Activated CD8-positive, alpha-beta T cell treated with anti-CD3 and anti-CD28 coated beads for 36 hours (primary cell): ENCODE measurements at regions of chr10 and their contacts with region 1.

Region 1: DNA sequence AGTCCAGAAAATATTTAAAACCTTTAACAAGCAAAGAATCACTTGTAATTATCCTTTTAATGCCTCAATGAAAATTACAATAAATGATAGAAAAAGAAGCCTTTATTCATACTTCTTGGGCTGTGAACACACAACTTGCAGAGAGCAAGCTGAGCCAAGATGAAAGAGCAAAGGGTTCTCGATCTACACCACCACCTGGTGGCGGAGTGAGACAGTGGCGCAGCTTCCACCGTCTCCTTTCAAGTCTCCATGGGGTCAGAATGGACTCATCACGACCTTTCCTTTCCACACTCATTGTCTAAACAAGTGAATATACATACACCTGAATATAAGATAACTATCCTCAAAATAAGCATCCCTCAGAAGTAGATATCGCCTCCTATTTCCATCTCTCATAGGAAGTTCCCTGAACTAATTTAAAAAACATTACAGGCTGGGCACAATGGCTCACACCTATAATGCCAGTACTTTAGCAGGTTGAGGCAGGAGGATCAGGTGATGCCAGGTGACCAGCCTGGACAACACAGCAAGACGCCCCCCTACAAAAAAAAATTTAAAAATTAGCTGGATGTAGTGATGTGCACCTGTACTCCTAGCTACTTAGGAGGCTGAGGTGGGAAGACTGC is 40.7 kb downstream of the ATE1 start:
- DNase-seq: peak; percentile 67
- ATAC-seq: peak; percentile 81
- H3K4me3 Mint-ChIP-seq: no peak overlapping the region
- H3K27ac Mint-ChIP-seq: no peak overlapping the region
- H3K4me1 Mint-ChIP-seq: no peaks in the 10 kb centered on the region
- H3K27me3 Mint-ChIP-seq: no peaks in the 10 kb centered on the region
- CTCF ChIP-seq: peak; percentile 70

Region 2: DNA sequence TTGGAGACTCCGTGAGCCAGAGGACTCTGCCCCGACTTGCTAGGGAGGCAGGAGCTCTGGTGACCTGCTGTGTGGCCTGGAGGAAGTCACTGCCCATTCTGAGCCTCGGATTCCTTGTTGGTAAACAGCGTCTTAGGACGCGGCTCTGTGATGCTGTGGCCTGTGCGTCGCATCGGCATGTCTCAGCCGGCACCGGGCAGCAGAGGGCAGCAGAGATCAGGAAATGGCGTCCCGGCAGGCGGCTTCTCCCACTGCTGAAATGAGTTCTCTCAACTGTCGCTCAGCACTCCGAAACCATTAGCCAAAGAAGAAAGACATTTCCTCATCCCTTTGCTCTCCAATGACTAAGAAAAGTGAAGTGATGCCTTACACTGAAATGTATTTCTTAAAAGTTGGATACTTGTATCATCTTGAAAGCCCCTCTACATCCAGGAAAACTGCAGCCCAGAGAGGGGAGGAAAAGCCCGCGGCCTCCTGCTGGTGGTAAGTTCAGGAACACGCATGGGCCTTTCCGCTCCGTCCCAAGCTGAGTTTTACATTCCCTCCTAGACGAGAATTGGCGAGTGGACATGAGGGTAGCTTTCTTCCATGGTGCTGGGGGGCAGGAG is 944.2 kb before region 1 on chr10:
- CTCF ChIA-PET with region 1: interaction called, 3 read pairs
- POLR2A ChIA-PET with region 1: no interaction called
- intact Hi-C with region 1: loop called (anchors 5 kb)
- DNase-seq: peak; percentile 80
- ATAC-seq: peak; percentile 97
- H3K4me3 Mint-ChIP-seq: no peak overlapping the region
- H3K27ac Mint-ChIP-seq: no peak overlapping the region
- H3K4me1 Mint-ChIP-seq: peaks cover 3% of the 10 kb centered on the region
- H3K27me3 Mint-ChIP-seq: peaks cover 22% of the 10 kb centered on the region
- CTCF ChIP-seq: peak; percentile 82

Region 3: GRCh38 chr10:120948889-120949608 is 938.1 kb before region 1 on chr10:
- CTCF ChIA-PET with region 1: interaction called, 15 read pairs
- POLR2A ChIA-PET with region 1: no interaction called
- intact Hi-C with region 1: loop called (anchors 5 kb)
- DNase-seq: peak; percentile 68
- ATAC-seq: peak; percentile 98
- H3K4me3 Mint-ChIP-seq: no peak overlapping the region
- H3K27ac Mint-ChIP-seq: no peak overlapping the region
- H3K4me1 Mint-ChIP-seq: no peaks in the 10 kb centered on the region
- H3K27me3 Mint-ChIP-seq: peaks cover 35% of the 10 kb centered on the region
- CTCF ChIP-seq: peak; percentile 75

Region 4: GRCh38 chr10:121823993-121824463 is 63.1 kb before region 1 on chr10:
- CTCF ChIA-PET with region 1: interaction called, 34 read pairs
- POLR2A ChIA-PET with region 1: no interaction called
- intact Hi-C with region 1: no loop called
- DNase-seq: peak; percentile 3
- ATAC-seq: peak; percentile 53
- H3K4me3 Mint-ChIP-seq: no peak overlapping the region
- H3K27ac Mint-ChIP-seq: no peak overlapping the region
- H3K4me1 Mint-ChIP-seq: peaks cover 2% of the 10 kb centered on the region
- H3K27me3 Mint-ChIP-seq: no peaks in the 10 kb centered on the region
- CTCF ChIP-seq: peak; percentile 73

Region 5: DNA sequence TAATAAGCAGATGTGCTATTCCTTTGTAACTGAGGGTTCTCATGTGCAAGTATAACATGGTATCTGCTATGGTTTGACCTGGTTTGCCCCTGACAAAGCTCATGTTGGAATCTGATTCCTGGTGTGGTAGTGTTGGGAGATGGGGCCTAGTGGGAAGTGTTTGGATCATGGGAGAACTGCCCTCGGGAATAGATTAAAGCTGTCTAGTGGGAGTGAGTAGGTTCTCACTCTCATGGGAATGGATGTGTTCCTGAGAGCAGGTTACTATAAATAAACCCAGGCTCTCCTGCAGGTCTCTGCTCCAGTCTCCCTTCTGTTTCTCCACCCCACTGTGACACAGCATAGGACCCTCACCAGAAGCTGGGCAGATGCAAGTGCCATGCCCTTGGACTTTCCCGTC is 57.0 kb before region 1 on chr10:
- CTCF ChIA-PET with region 1: interaction called, 34 read pairs
- POLR2A ChIA-PET with region 1: no interaction called
- intact Hi-C with region 1: no loop called
- DNase-seq: no peak
- ATAC-seq: no peak
- H3K4me3 Mint-ChIP-seq: no peak overlapping the region
- H3K27ac Mint-ChIP-seq: no peak overlapping the region
- H3K4me1 Mint-ChIP-seq: no peaks in the 10 kb centered on the region
- H3K27me3 Mint-ChIP-seq: no peaks in the 10 kb centered on the region
- CTCF ChIP-seq: no peak

Region 6: DNA sequence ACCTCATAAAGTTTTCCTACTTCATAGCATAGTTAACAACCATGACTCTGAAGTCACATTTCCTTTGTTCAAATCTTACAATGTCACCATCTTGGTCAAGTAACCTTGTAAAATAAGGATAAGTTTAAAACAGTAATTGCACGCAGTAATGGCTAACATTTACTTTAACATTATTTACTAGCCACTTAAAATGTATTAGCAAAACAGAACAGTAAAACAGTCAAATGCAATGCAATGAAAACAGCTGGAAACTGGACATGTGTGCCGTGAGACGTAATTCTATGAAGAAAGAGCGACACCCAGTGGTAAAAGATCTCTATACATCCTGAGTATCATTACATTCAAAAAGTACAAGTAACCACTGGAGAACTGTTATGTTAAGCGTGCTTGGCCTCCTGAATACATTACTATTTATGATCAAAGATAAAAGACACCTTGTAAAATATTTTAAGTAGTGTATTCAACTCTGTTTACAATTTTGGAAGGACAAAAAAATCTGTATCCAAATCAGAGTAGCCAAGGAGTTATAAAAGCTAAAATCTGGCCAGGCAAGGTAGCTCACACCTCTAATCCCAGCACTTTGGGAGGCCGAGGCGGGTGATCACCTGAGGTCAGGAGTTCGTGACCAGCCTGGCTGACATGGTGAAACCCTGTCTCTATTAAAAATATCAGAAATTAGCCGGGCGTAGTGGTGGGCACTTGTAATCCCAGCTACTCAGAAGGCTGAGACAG is 13.5 kb after region 1 on chr10:
- CTCF ChIA-PET with region 1: interaction called, 21 read pairs
- POLR2A ChIA-PET with region 1: no interaction called
- intact Hi-C with region 1: no loop called
- DNase-seq: peak; percentile 5
- ATAC-seq: peak; percentile 70
- H3K4me3 Mint-ChIP-seq: no peak overlapping the region
- H3K27ac Mint-ChIP-seq: no peak overlapping the region
- H3K4me1 Mint-ChIP-seq: peaks cover 2% of the 10 kb centered on the region
- H3K27me3 Mint-ChIP-seq: no peaks in the 10 kb centered on the region
- CTCF ChIP-seq: peak; percentile 94